Activated T-helper 2 cell treated with anti-CD3 and anti-CD28 coated beads, Interferon-gamma antibody, Interleukin-2, Interleukin-4, amounts not matched to agents 10 μg/mL and 5 μg/mL and 100 μg/mL, durations not matched to agents 14 hours and 24 hours and 36 hours (primary cell): ENCODE measurements at regions of chr7 and their contacts with region 1.

Region 1: GRCh38 chr7:88219781-88220747 is at the start of gene SRI:
- DNase-seq: peak; percentile 87
- H3K4me3 Mint-ChIP-seq: peak within 1 kb of the TSS; percentile 96
- H3K27ac Mint-ChIP-seq: peak within 1 kb of the TSS; percentile 99
- H3K4me1 Mint-ChIP-seq: peaks cover 37% of the 10 kb centered on the region
- H3K27me3 Mint-ChIP-seq: no peaks in the 10 kb centered on the region
- total RNA-seq, gene SRI: 264 and 271 TPM in 2 replicates

Region 2: DNA sequence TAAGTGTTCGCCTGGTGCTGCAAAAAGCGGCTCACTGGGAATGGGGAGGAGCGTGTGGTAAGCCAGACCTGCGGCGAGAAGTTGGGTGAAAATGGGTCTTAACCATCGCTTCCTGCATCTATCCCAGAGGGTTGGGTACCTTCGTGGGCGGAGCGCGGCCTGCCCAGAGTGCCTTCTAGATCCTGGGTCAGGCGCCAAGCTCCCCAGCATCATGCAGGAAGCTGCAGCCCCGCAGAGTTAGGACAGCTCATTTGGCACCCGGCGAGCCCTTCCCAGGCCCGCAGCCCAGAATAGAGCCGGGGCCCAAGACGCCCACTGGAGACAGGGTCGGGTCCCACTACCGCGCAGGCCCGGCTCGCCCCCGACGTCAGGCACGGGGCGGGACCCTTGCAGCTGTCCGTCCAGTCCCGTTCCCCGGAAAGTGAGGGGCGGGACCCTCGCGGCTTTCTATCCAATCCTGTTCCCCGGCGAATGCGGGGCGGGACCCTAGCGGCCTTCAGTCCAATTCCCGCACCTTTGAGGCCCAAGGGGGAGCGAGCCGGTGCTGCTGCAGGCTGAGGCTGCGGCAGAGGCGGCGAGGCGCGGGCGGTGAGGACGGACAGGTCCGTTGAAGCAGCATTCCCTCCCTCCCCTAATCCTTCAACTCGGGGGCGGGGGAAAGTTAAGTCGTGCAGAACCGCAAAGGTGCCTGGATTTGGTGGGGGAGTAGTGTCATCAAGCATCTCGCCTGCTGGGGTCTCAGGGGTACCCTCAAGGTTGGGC is 874.7 kb before region 1 on chr7 and contains the start of gene CROT:
- intact Hi-C with region 1: loop called (anchors 10 kb)
- DNase-seq: peak; percentile 92
- H3K4me3 Mint-ChIP-seq: peak within 1 kb of the TSS; percentile 87
- H3K27ac Mint-ChIP-seq: peak within 1 kb of the TSS; percentile 79
- H3K4me1 Mint-ChIP-seq: peaks cover 38% of the 10 kb centered on the region
- H3K27me3 Mint-ChIP-seq: no peaks in the 10 kb centered on the region
- total RNA-seq, gene CROT: 7.5 and 7.9 TPM in 2 replicates

Region 3: DNA sequence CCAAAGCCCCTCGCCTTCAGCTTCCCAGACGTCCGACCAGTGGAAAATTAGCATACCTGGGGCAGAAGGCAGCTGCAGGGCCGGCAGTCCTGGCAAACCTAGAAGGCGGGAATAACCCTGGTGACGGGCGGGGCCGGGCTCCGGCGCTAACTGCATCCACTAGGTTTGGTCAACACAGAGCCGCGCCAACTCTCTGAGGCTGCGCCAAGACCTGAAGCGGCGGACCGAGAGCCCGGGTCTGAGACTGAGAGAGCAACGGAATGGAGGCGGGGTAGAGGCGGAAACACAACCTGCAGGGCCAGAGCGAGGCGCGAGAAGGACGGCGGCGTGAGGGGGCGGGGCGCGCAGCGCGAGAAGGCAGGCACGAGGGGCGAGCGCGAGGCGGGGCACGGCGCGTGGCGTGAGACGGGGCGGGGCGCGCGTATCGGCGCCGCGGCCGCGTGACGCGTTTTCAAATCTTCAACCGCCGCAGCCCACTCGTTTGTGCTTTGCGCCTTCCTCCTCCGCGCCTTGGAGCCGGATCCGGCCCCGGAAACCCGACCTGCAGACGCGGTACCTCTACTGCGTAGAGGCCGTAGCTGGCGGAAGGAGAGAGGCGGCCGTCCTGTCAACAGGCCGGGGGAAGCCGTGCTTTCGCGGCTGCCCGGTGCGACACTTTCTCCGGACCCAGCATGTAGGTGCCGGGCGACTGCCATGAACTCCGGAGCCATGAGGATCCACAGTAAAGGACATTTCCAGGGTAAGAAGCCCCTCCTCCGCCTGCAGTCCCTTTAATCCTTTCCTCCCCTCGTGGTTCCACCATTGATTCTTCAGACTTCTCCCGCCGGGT is 343.8 kb before region 1 on chr7 and contains the starts of genes DBF4 and SLC25A40:
- intact Hi-C with region 1: loop called (anchors 1 kb)
- DNase-seq: peak; percentile 96
- H3K4me3 Mint-ChIP-seq: peak within 1 kb of the TSS; percentile 96
- H3K27ac Mint-ChIP-seq: peak within 1 kb of the TSS; percentile 97
- H3K4me1 Mint-ChIP-seq: peaks cover 49% of the 10 kb centered on the region
- H3K27me3 Mint-ChIP-seq: no peaks in the 10 kb centered on the region
- total RNA-seq, gene DBF4: 72.3 and 75.3 TPM in 2 replicates
- total RNA-seq, gene SLC25A40: 48.7 and 49.3 TPM in 2 replicates

Region 4: DNA sequence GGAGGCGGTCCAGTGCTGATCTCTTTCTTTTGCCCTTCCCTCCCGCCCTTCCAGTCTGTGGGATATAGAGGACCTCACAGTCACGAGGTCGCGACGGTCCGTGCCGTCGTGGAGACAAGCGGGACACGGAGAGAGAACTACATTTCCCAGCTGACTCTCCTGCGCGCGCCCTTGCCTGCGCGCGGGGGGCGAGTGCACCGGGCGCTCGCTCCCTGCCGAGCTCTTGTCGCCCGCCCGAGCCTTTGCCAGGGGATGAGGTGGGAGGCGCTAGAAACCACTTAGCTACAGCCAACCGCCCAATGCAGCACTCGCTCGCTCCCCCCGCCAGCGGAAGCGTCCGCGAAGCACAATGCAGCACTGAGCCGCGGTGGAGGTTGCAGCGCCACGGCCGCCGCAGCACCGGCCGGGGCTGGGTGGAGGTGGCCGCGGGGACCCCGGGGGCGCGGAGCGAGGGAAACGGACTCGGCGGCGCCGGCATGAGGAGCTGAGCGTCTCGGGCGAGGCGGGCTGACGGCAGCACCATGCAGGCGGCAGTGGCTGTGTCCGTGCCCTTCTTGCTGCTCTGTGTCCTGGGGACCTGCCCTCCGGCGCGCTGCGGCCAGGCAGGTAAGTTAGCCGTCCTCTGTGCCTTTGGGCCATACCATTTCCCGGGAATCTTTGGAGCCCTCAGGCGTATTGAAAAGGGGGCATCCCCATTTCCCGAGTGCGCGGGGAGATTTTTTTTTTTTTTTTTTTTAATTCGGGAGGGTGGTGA is 285.9 kb before region 1 on chr7 and contains the start of gene ADAM22:
- intact Hi-C with region 1: loop called (anchors 5 kb)
- DNase-seq: peak; percentile 77
- H3K4me3 Mint-ChIP-seq: peak within 1 kb of the TSS; percentile 91
- H3K27ac Mint-ChIP-seq: no peak within 1 kb of the TSS
- H3K4me1 Mint-ChIP-seq: peaks cover 7% of the 10 kb centered on the region
- H3K27me3 Mint-ChIP-seq: peaks cover 31% of the 10 kb centered on the region
- total RNA-seq, gene ADAM22: 3.7 and 4.0 TPM in 2 replicates

Region 5: GRCh38 chr7:88184848-88185304 is 35.2 kb before region 1 on chr7:
- intact Hi-C with region 1: loop called (anchors 2 kb)
- DNase-seq: no peak
- H3K4me3 Mint-ChIP-seq: no peak overlapping the region
- H3K27ac Mint-ChIP-seq: peak overlapping the region; percentile 49
- H3K4me1 Mint-ChIP-seq: peaks cover 7% of the 10 kb centered on the region
- H3K27me3 Mint-ChIP-seq: no peaks in the 10 kb centered on the region

Region 6: GRCh38 chr7:88306590-88307048 is 86.6 kb after region 1 on chr7 and contains the start of gene STEAP4:
- intact Hi-C with region 1: no loop called
- DNase-seq: no peak
- H3K4me3 Mint-ChIP-seq: peak within 1 kb of the TSS; percentile 37
- H3K27ac Mint-ChIP-seq: no peak within 1 kb of the TSS
- H3K4me1 Mint-ChIP-seq: peaks cover 3% of the 10 kb centered on the region
- H3K27me3 Mint-ChIP-seq: peaks cover 44% of the 10 kb centered on the region
- total RNA-seq, gene STEAP4: 0.39 and 0.48 TPM in 2 replicates

Region 7: DNA sequence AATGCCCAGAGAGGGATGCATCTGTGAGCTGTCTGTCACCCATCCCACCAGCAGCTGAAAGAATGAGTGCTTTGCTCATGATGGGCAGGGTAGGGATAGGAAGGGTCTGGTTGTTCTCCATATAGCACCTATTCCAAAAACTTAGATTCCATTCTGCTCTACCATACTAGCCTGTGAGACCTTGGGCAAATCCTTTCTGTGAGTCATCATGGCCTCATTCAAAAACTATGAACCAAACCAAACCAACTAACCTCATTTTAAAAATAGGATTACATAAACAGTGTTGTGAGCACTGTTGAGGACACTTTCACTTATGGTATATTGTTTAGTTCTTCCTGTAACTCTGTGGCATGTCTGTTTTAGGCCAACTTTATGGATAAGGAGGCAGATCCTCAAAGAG is 117.5 kb after region 1 on chr7:
- intact Hi-C with region 1: loop called (anchors 5 kb)
- DNase-seq: no peak
- H3K4me3 Mint-ChIP-seq: no peak overlapping the region
- H3K27ac Mint-ChIP-seq: no peak overlapping the region
- H3K4me1 Mint-ChIP-seq: peaks cover 8% of the 10 kb centered on the region
- H3K27me3 Mint-ChIP-seq: peaks cover 9% of the 10 kb centered on the region